ENCODE measurements at regions of chrX and their contacts with region 1.

Region 1: DNA sequence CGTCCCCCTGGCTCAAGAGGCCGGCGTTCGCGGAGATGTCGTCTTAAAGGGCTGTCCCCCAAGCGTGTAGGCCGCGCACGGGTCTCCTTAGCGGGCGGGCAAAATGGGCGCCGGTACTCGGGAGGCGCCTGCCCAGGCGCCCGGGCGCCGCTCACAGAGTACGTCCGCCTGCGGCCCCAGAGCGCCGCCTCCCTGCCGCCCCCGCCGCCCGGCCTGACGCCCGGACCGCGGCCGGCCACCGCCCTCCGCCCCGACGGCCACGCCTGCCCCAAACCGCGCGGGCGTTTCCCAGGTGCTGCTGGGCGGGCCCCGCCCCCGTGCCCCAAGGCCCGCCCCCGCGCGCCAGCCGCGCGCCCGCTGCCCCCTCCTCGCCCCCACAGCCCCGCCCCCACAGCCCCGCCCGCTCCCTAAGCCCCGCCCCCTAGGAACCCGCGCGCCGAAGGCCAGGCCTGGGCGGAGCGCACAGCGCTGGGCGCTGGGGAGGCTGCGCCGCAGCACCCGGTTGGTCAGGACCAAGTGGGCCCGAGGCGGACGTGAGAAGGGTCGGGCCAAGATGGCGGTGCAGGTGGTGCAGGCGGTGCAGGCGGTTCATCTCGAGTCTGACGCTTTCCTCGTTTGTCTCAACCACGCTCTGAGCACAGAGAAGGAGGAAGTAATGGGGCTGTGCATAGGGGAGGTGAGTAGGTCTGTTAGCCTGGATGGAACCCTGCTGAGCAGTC is at the starts of genes BRCC3, CMC4 and MTCP1:
- DNase-seq: peak; percentile 55 to 87 (median 72)
- ATAC-seq: peak; percentile 80 to 91
- H3K4me3 Mint-ChIP-seq: peak within 1 kb of the TSS; percentile 80 to 94 (median 90)
- H3K27ac Mint-ChIP-seq: peak within 1 kb of the TSS; percentile 80 to 97 (median 95)
- H3K4me1 Mint-ChIP-seq: peaks cover 27 to 60% (median 54%) of the 10 kb centered on the region in 4 donors
- H3K27me3 Mint-ChIP-seq: no peaks in the 10 kb centered on the region
- polyA plus RNA-seq, gene BRCC3: 17.0 to 25.7 (median 17.4) TPM
- polyA plus RNA-seq, gene CMC4: 25.6 to 27.7 (median 26.1) TPM
- polyA plus RNA-seq, gene MTCP1: 27.9 to 37.9 (median 29.3) TPM

Region 2: GRCh38 chrX:155026726-155027508 is 44.2 kb before region 1 on chrX and contains the start of gene FUNDC2:
- POLR2A ChIA-PET with region 1: interaction called, 12 read pairs
- DNase-seq: peak; percentile 79 to 97 (median 93)
- ATAC-seq: peak; percentile 86 to 92
- H3K4me3 Mint-ChIP-seq: peak within 1 kb of the TSS; percentile 82 to 92 (median 88)
- H3K27ac Mint-ChIP-seq: peak within 1 kb of the TSS; percentile 87 to 98 (median 96)
- H3K4me1 Mint-ChIP-seq: peaks cover 8 to 30% (median 16%) of the 10 kb centered on the region in 4 donors
- H3K27me3 Mint-ChIP-seq: no peaks in the 10 kb centered on the region
- polyA plus RNA-seq, gene FUNDC2: 161 to 203 (median 178) TPM

Region 3: GRCh38 chrX:155086202-155086840 is 15.2 kb after region 1 on chrX:
- POLR2A ChIA-PET with region 1: no interaction called
- DNase-seq: peak in 8 of 10 donors; percentile 14 to 67 (median 22)
- ATAC-seq: peak in 1 of 2 donors; percentile 65
- H3K4me3 Mint-ChIP-seq: no peak overlapping the region
- H3K27ac Mint-ChIP-seq: no peak overlapping the region
- H3K4me1 Mint-ChIP-seq: peaks cover 0 to 3% (median 1%) of the 10 kb centered on the region in 4 donors
- H3K27me3 Mint-ChIP-seq: no peaks in the 10 kb centered on the region